ENCODE measurements at regions of chr7 and their contacts with region 1.

Region 1: GRCh38 chr7:44606450-44607254 is at the start of gene OGDH:
- DNase-seq: peak; percentile 97 to 100 (median 99)
- ATAC-seq: peak; percentile 91
- H3K4me3 ChIP-seq: peak within 1 kb of the TSS; percentile 69
- H3K4me3 Mint-ChIP-seq: peak within 1 kb of the TSS; percentile 100
- H3K27ac ChIP-seq: peak within 1 kb of the TSS; percentile 86 to 99
- H3K27ac Mint-ChIP-seq: peak within 1 kb of the TSS; percentile 100
- H3K4me1 ChIP-seq: peaks cover 43% of the 10 kb centered on the region
- H3K4me1 Mint-ChIP-seq: peaks cover 44% of the 10 kb centered on the region
- H3K27me3 ChIP-seq: no peaks in the 10 kb centered on the region
- H3K27me3 Mint-ChIP-seq: peaks cover 5% of the 10 kb centered on the region
- CTCF ChIP-seq: no peak
- total RNA-seq, gene OGDH: 39.8 to 43.8 TPM

Region 2: DNA sequence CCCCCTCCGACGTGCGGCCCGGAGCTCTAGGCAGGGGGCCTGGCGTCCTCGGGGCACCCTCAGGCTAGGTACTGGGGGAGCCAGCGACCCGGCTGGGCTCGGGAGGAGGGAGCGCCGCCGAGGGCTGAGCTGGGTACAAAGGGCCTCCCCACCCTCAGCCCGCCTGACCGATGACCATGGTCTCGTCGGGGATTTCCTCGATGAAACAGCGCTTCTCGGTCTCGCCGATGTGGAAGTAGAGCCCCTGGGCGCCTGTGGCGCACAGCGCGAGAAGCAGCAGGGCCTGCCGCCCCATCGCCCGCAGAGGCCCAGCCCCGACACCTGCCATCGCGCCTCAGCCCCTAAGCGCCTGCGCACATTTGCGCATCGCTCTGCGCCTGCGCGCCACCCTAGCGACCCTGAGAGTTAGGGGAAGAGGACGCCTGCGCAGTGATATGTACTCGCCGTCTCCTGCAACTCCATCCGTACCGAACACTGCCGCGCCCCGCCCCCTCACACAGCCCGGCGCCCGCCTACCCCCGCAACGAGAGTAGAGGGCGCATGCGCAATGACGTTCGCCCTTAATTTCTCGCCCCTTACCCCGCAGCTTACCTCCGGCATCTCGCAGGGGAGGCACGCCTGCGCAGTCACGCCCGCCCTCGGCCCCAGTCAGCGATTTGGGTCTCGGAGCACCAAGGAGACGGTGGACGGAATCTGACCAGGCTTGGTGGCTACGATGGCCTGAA is 24.6 kb before region 1 on chr7 and contains the start of gene TMED4:
- CTCF ChIA-PET with region 1: no interaction called
- POLR2A ChIA-PET with region 1: interaction called, 64 read pairs
- intact Hi-C with region 1: loop called (anchors 1 kb)
- DNase-seq: peak; percentile 100
- ATAC-seq: peak; percentile 86
- H3K4me3 ChIP-seq: peak within 1 kb of the TSS; percentile 87
- H3K4me3 Mint-ChIP-seq: peak within 1 kb of the TSS; percentile 95
- H3K27ac ChIP-seq: peak within 1 kb of the TSS; percentile 96
- H3K27ac Mint-ChIP-seq: peak within 1 kb of the TSS; percentile 97
- H3K4me1 ChIP-seq: peaks cover 32% of the 10 kb centered on the region
- H3K4me1 Mint-ChIP-seq: peaks cover 39% of the 10 kb centered on the region
- H3K27me3 ChIP-seq: no peaks in the 10 kb centered on the region
- H3K27me3 Mint-ChIP-seq: no peaks in the 10 kb centered on the region
- CTCF ChIP-seq: no peak
- total RNA-seq, gene TMED4: 134 to 138 TPM

Region 3: GRCh38 chr7:44633254-44634186 is 26.9 kb after region 1 on chr7:
- CTCF ChIA-PET with region 1: interaction called, 12 read pairs
- POLR2A ChIA-PET with region 1: interaction called, 229 read pairs
- intact Hi-C with region 1: loop called (anchors 1 to 2 kb)
- DNase-seq: peak in 12 of 14 experiments; percentile 29 to 92 (median 59)
- ATAC-seq: peak; percentile 47
- H3K4me3 ChIP-seq: no peak overlapping the region
- H3K4me3 Mint-ChIP-seq: peak overlapping the region; percentile 78
- H3K27ac ChIP-seq: peak overlapping the region; percentile 87 to 91
- H3K27ac Mint-ChIP-seq: peak overlapping the region; percentile 96
- H3K4me1 ChIP-seq: peaks cover 100% of the 10 kb centered on the region
- H3K4me1 Mint-ChIP-seq: peaks cover 81% of the 10 kb centered on the region
- H3K27me3 ChIP-seq: no peaks in the 10 kb centered on the region
- H3K27me3 Mint-ChIP-seq: no peaks in the 10 kb centered on the region
- CTCF ChIP-seq: no peak

Region 4: DNA sequence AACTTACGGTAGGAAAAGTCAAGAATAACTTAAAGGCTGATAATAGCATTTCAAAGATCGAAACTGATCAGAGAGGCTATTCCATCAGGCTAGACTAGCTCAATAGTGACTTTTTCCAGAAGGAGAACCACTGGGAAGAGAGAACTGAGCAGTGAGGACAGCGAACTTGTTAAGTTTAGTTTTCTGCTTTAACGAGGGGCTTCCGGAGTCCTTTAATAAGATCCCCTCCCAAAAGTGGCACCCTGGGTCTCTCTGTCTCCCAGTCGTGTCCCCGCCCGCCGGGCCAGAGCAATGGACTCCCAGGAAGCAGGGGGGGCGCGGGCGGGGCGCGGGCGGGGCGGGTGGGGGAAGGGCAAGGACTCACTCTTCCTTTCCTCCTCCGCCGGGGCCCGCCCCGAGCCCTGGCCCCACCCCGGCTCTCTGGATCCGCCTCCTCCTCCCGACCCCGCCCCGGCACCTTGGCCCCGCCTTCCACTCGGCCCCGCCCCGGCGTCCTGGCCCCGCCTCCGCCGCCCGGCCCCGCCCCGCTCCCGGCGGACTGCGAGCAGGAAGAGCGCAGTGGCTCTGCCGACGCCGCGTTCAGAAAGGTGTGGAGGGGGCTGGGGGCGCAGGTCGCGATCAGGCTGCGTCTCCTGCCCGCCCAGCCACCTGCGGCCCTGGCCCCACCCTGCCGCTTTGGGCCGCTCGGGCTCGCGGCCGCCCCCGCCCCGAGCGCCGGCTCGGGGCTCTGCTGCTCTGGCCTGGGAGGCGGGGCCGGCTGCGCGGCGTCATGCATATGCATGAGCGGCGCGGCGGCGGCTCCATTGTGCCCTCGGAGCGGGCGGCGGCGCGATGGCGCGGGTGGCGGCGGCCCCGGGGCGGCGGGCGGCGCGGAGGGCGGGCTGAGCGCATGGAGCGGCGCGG is 141.6 kb after region 1 on chr7 and contains the start of gene ZMIZ2:
- CTCF ChIA-PET with region 1: no interaction called
- POLR2A ChIA-PET with region 1: interaction called, 32 read pairs
- intact Hi-C with region 1: loop called (anchors 1 to 2 kb)
- DNase-seq: peak; percentile 85 to 97 (median 92)
- ATAC-seq: peak; percentile 85
- H3K4me3 ChIP-seq: peak within 1 kb of the TSS; percentile 87
- H3K4me3 Mint-ChIP-seq: peak within 1 kb of the TSS; percentile 84
- H3K27ac ChIP-seq: peak within 1 kb of the TSS; percentile 70 to 75
- H3K27ac Mint-ChIP-seq: peak within 1 kb of the TSS; percentile 86
- H3K4me1 ChIP-seq: peaks cover 37% of the 10 kb centered on the region
- H3K4me1 Mint-ChIP-seq: peaks cover 43% of the 10 kb centered on the region
- H3K27me3 ChIP-seq: no peaks in the 10 kb centered on the region
- H3K27me3 Mint-ChIP-seq: no peaks in the 10 kb centered on the region
- CTCF ChIP-seq: no peak
- total RNA-seq, gene ZMIZ2: 81.5 to 82.0 TPM

Region 5: DNA sequence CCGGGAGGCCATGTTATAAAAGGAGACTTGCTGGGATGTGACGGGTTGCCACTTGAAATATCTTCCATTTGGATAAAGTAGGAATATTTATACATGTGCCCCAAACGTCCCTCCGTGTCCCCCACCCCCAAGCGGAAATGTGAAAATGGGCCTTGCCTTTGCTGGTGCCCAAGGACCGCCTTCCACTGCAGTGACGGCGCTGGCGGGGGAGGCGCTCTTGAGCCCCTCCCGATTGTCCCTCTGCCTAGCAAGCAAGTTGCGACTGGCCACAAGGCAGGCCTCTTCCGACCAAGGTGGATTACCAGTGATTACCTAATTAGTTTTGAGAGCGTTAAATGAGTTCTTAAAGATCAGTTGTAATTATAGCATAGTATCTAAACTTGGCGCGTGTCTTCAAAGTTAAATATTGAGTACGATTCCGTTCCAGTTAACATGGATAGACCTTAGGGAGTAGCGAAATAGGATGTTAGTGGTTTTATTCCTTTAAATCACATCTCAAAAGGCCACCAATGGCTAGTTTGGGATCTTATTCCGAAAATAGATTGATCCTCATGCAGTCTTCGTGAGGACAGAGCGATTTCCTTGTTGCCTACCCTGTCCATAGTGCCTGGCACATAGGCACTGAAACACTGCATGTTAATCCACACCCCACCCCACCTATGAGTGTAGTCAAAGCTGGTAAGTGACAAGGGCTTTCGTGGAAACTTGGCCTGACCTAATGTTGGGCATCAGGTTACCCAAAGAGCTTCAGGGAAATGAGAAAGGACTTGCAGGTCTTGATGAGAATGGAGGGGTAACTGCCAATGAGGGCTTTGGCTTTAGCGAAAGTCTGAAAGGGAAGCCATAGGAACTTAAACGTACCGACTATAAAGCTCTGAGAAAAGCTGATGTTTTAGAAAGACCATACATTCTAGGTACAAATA is 190.9 kb after region 1 on chr7:
- CTCF ChIA-PET with region 1: no interaction called
- POLR2A ChIA-PET with region 1: interaction called, 37 read pairs
- intact Hi-C with region 1: loop called (anchors 5 kb)
- DNase-seq: peak; percentile 65 to 94 (median 80)
- ATAC-seq: peak; percentile 57
- H3K4me3 ChIP-seq: peak overlapping the region; percentile 65
- H3K4me3 Mint-ChIP-seq: peak overlapping the region; percentile 91
- H3K27ac ChIP-seq: peak overlapping the region; percentile 92 to 97
- H3K27ac Mint-ChIP-seq: peak overlapping the region; percentile 93
- H3K4me1 ChIP-seq: peaks cover 29% of the 10 kb centered on the region
- H3K4me1 Mint-ChIP-seq: peaks cover 40% of the 10 kb centered on the region
- H3K27me3 ChIP-seq: no peaks in the 10 kb centered on the region
- H3K27me3 Mint-ChIP-seq: no peaks in the 10 kb centered on the region
- CTCF ChIP-seq: peak; percentile 56

Region 6: GRCh38 chr7:45111298-45112223 is 504.9 kb after region 1 on chr7 and contains the start of gene TBRG4:
- CTCF ChIA-PET with region 1: no interaction called
- POLR2A ChIA-PET with region 1: interaction called, 23 read pairs
- intact Hi-C with region 1: loop called in 1 of 2 experiments (anchors 2 kb)
- DNase-seq: peak; percentile 86 to 98 (median 91)
- ATAC-seq: peak; percentile 78
- H3K4me3 ChIP-seq: peak within 1 kb of the TSS; percentile 94
- H3K4me3 Mint-ChIP-seq: peak within 1 kb of the TSS; percentile 98
- H3K27ac ChIP-seq: peak within 1 kb of the TSS; percentile 99
- H3K27ac Mint-ChIP-seq: peak within 1 kb of the TSS; percentile 96
- H3K4me1 ChIP-seq: peaks cover 51% of the 10 kb centered on the region
- H3K4me1 Mint-ChIP-seq: peaks cover 55% of the 10 kb centered on the region
- H3K27me3 ChIP-seq: no peaks in the 10 kb centered on the region
- H3K27me3 Mint-ChIP-seq: peaks cover 9% of the 10 kb centered on the region
- CTCF ChIP-seq: no peak
- total RNA-seq, gene TBRG4: 104 to 105 TPM

Measured in CD4-positive, alpha-beta T cell (primary cell).